A673 (cell line): ENCODE measurements at regions of chr11 and their contacts with region 1.

Region 1: DNA sequence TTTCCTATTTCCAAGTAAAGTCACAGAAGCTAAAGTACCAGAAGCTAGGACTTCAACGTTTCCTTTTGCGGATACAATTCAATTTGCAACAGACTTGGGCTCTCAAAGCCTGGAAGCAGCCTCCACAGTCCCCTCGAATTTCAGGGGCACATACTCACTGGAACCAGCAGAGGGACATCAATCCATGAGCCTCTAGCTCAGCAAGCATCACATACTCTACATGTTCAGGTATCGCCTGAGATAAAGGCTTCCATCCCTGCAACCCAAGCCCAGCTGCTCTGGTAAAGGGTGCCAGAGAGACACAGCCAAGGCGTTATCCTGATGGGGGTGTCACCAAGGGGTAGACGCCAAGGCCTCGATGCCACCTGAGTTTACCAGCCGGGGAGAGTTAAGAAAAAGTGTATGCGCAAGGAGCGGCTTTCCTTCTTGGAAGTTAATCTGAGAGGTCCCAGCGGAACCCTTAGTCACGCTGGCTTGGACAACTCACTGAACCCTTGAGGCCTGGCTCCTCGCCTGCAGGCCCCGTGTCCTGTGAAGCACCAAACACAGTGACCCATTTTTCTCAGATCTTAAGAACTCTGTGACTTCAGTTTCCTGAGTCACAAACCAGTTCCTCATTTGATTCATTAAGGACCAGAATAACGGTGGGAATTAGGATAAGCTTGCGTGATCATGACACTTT is 13.0 kb downstream of the LTO1 start:
- DNase-seq: peak; percentile 62
- H3K4me3 ChIP-seq: no peak overlapping the region
- H3K27ac ChIP-seq: no peak overlapping the region
- H3K4me1 ChIP-seq: peaks cover 8% of the 10 kb centered on the region
- H3K27me3 ChIP-seq: no peaks in the 10 kb centered on the region
- CTCF ChIP-seq: peak; percentile 54

Region 2: GRCh38 chr11:69122642-69123431 is 539.3 kb before region 1 on chr11:
- CTCF ChIA-PET with region 1: interaction called, 11 read pairs
- POLR2A ChIA-PET with region 1: no interaction called
- intact Hi-C with region 1: no loop called
- DNase-seq: peak; percentile 72
- H3K4me3 ChIP-seq: no peak overlapping the region
- H3K27ac ChIP-seq: peak overlapping the region; percentile 54
- H3K4me1 ChIP-seq: peaks cover 20% of the 10 kb centered on the region
- H3K27me3 ChIP-seq: no peaks in the 10 kb centered on the region
- CTCF ChIP-seq: no peak